ENCODE measurements at regions of chr1 and their contacts with region 1.

Region 1: GRCh38 chr1:211654838-211655787 is 20.3 kb downstream of the NEK2 start:
- DNase-seq: peak; percentile 67
- ATAC-seq: peak; percentile 93
- H3K4me3 ChIP-seq: no peak overlapping the region
- H3K27ac ChIP-seq: no peak overlapping the region
- H3K4me1 ChIP-seq: peaks cover 11 to 28% of the 10 kb centered on the region in 2 experiments; a peak in 3 of 4 replicates
- H3K27me3 ChIP-seq: no peaks in the 10 kb centered on the region
- CTCF ChIP-seq: peak; percentile 91 to 98 (median 92)
- POLR2A ChIP-seq: no peak
- RAD21 ChIP-seq: peak; percentile 99

Region 2: DNA sequence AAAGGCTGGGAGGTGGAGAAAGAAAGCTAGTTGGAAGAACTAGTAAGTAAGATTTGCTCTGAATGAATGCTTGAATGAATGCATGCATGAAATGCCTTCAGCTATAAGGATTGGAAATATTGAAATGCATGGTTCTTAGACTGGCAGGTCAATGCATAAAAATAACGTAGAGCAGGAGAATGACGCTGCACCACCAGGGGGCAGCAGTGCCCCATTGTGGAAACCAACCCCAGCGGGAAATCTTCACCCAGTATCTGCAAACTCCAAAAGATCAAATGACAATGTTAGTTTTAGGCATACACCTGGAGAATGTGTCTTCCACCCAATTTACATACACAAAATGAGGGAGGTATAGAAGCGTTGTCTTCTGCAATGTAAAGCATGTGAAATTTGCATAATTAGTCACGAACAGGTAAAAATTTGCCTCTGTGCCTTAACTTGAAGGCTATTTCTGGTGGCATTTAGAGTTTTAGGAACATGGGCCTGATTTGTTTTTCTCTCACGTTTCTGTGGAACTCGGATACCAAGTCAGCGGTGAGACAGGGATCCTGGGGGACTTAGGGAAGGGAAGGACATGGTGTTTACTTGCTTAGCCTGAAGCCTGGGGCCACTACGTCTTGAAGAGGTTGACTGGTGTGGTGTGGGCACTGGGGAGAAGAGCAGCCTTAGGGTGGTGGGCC is 1247.8 kb before region 1 on chr1:
- CTCF ChIA-PET with region 1: interaction called, 3 read pairs
- POLR2A ChIA-PET with region 1: no interaction called
- RAD21 ChIA-PET with region 1: no interaction called
- intact Hi-C with region 1: loop called (anchors 5 kb)
- DNase-seq: peak; percentile 27
- ATAC-seq: peak; percentile 92
- H3K4me3 ChIP-seq: no peak overlapping the region
- H3K27ac ChIP-seq: no peak overlapping the region
- H3K4me1 ChIP-seq: no peaks in the 10 kb centered on the region
- H3K27me3 ChIP-seq: no peaks in the 10 kb centered on the region
- CTCF ChIP-seq: peak; percentile 73 to 97 (median 88)
- POLR2A ChIP-seq: no peak
- RAD21 ChIP-seq: peak; percentile 91

Region 3: GRCh38 chr1:210584439-210585113 is 1070.5 kb before region 1 on chr1:
- CTCF ChIA-PET with region 1: no interaction called
- POLR2A ChIA-PET with region 1: no interaction called
- RAD21 ChIA-PET with region 1: no interaction called
- intact Hi-C with region 1: loop called (anchors 2 kb)
- DNase-seq: peak; percentile 54
- ATAC-seq: peak; percentile 99
- H3K4me3 ChIP-seq: no peak overlapping the region
- H3K27ac ChIP-seq: no peak overlapping the region
- H3K4me1 ChIP-seq: no peaks in the 10 kb centered on the region
- H3K27me3 ChIP-seq: peaks cover 17% of the 10 kb centered on the region; the same call in 1 of the 2 replicates
- CTCF ChIP-seq: peak; percentile 74 to 82 (median 76)
- POLR2A ChIP-seq: no peak
- RAD21 ChIP-seq: peak; percentile 92

Region 4: DNA sequence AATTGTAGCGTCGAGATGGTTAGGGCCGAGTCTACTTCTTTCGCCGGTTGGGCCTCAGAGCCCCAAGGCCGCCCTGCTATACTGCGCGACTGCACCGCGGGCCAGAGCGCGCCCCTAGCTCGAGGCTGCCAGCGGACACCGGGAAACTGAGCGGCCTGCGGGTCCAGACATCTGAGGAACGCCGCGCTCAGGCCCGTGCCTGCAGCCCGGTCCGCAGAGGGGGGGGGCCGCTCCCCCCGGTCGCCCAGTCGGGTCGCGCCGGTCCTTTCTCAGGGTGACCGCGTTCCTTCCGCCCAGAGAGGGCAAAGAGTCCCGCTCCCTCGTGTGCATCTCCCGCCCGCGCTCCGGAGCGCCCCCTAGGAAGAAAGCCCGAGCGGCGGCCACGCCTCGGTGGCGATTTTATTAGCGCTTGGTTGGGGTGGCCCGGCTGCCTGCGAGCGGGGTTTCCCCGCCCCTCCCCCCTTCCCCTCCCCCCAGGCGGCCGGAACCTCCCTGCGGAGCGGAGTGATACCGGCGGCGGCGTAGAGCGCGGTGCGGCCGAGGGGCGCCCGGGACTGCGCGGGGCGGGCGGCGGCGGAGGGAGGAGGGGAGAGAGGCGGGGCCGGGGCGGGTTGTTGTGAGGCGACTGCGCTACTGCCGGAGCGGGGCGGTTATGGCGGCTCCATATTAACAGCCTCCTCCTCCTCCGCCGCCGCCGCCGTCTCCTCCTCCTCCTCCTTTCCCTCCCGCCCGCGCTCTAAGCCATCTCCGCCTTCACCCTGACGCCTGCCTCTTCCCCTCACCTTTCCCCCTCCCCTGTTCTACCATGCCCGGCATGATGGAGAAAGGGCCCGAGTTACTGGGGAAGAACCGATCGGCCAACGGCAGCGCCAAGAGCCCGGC is 396.1 kb before region 1 on chr1 and contains the start of gene RCOR3:
- CTCF ChIA-PET with region 1: no interaction called
- POLR2A ChIA-PET with region 1: no interaction called
- RAD21 ChIA-PET with region 1: no interaction called
- intact Hi-C with region 1: loop called (anchors 1 kb)
- DNase-seq: peak; percentile 72
- ATAC-seq: peak; percentile 81
- H3K4me3 ChIP-seq: peak within 1 kb of the TSS; percentile 72 to 91
- H3K27ac ChIP-seq: peak within 1 kb of the TSS; percentile 96
- H3K4me1 ChIP-seq: peaks cover 14 to 21% of the 10 kb centered on the region in 2 experiments
- H3K27me3 ChIP-seq: no peaks in the 10 kb centered on the region
- CTCF ChIP-seq: peak; percentile 33 to 51 (median 49); a peak in 5 of 6 replicates
- POLR2A ChIP-seq: peak; percentile 12
- RAD21 ChIP-seq: 0 out of 2 replicates have a peak, but pooled peaks have one; percentile 10
- total RNA-seq, gene RCOR3: 25.7 TPM

Region 5: GRCh38 chr1:211281320-211282022 is 373.6 kb before region 1 on chr1:
- CTCF ChIA-PET with region 1: no interaction called
- POLR2A ChIA-PET with region 1: no interaction called
- RAD21 ChIA-PET with region 1: no interaction called
- intact Hi-C with region 1: no loop called
- DNase-seq: no peak
- ATAC-seq: no peak
- H3K4me3 ChIP-seq: no peak overlapping the region
- H3K27ac ChIP-seq: no peak overlapping the region
- H3K4me1 ChIP-seq: no peaks in the 10 kb centered on the region
- H3K27me3 ChIP-seq: no peaks in the 10 kb centered on the region
- CTCF ChIP-seq: no peak
- POLR2A ChIP-seq: no peak
- RAD21 ChIP-seq: no peak

Region 6: GRCh38 chr1:211469938-211470529 is 185.1 kb before region 1 on chr1:
- CTCF ChIA-PET with region 1: no interaction called
- POLR2A ChIA-PET with region 1: no interaction called
- RAD21 ChIA-PET with region 1: no interaction called
- intact Hi-C with region 1: loop called (anchors 2 kb)
- DNase-seq: peak; percentile 72
- ATAC-seq: peak; percentile 100
- H3K4me3 ChIP-seq: no peak overlapping the region
- H3K27ac ChIP-seq: no peak overlapping the region
- H3K4me1 ChIP-seq: peaks cover 3 to 11% of the 10 kb centered on the region in 2 experiments; a peak in 3 of 4 replicates
- H3K27me3 ChIP-seq: no peaks in the 10 kb centered on the region
- CTCF ChIP-seq: peak; percentile 83 to 90 (median 87)
- POLR2A ChIP-seq: no peak
- RAD21 ChIP-seq: peak; percentile 72

Region 7: DNA sequence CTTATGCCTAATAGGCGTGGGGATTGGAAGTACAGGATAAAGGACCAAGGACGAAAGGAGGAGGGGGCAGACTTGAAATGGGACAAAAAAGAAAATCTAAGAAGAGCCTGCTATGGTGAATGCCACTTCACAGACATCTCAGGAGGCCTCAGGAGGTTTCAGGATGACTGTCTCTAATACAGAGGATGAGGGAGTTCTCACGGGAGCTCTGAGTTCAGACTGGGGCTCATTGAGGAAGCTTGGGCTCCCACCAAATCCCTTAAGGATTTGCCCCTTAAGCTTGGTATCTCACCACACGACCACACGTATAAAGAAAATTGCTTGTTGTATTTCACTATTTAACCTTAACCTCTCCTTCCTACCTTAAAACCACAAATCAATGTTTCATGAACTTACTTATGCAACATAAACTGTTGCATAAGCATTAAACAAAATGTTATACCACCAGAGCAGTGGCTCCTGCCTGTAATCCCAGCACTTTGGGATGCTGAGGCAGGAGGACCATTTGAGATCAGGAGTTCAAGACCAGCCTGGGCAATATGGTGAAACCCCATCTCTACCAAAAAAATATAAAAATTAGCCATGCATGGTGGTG is 88.6 kb before region 1 on chr1:
- CTCF ChIA-PET with region 1: no interaction called
- POLR2A ChIA-PET with region 1: no interaction called
- RAD21 ChIA-PET with region 1: no interaction called
- intact Hi-C with region 1: no loop called
- DNase-seq: no peak
- ATAC-seq: no peak
- H3K4me3 ChIP-seq: no peak overlapping the region
- H3K27ac ChIP-seq: no peak overlapping the region
- H3K4me1 ChIP-seq: no peaks in the 10 kb centered on the region
- H3K27me3 ChIP-seq: no peaks in the 10 kb centered on the region
- CTCF ChIP-seq: no peak
- POLR2A ChIP-seq: no peak
- RAD21 ChIP-seq: no peak

Region 8: GRCh38 chr1:211578640-211579433 is 76.3 kb before region 1 on chr1 and contains the start of gene SLC30A1:
- CTCF ChIA-PET with region 1: interaction called, 5 read pairs
- POLR2A ChIA-PET with region 1: no interaction called
- RAD21 ChIA-PET with region 1: no interaction called
- intact Hi-C with region 1: loop called (anchors 1 kb)
- DNase-seq: peak; percentile 94
- ATAC-seq: peak; percentile 87
- H3K4me3 ChIP-seq: peak within 1 kb of the TSS; percentile 74 to 84
- H3K27ac ChIP-seq: peak within 1 kb of the TSS; percentile 84
- H3K4me1 ChIP-seq: peaks cover 10 to 40% of the 10 kb centered on the region in 2 experiments
- H3K27me3 ChIP-seq: no peaks in the 10 kb centered on the region
- CTCF ChIP-seq: no peak
- POLR2A ChIP-seq: peak; percentile 30
- RAD21 ChIP-seq: no peak
- total RNA-seq, gene SLC30A1: 9.7 TPM

Region 9: DNA sequence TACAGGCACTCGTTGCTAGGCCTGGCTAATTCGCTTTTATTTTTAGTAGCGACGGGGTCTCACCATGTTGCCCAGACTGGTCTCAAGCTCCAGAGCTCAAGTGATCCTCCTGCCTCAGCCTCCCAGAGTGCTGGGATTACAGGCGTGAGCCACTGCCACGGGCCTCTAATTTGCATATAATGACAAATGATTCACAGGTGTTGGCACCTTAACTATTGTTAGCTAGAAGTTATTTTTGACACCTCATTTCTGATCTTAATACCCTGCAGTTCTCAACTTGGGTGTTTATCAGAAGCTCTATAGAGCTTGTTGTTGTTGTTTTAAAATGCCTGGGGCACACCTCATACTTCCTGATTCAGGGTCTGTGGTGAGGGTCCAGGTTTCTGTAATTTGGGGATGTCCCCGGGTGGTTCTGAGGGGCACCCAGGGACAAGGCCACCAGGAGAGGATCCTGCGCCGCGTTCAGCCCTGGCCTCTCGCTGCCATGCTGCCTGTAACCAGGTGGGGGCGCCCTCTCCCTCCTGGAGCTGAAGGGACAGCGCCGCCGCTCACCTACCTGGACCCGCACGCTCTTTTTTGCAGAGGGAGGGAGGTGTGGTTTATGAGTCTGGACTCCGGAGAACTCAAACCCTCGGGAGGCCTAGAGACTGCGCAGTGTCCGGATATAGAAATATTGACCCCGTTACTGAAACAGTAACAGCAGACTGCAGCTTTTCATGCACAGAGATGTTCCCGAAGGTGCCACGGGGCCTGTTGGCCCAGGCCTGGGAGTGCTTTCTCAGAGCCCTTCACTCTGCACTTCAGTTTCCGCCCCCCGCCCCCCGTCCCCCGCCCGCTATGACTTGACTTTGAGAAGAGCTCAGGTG is 43.3 kb after region 1 on chr1:
- CTCF ChIA-PET with region 1: no interaction called
- POLR2A ChIA-PET with region 1: no interaction called
- RAD21 ChIA-PET with region 1: no interaction called
- intact Hi-C with region 1: no loop called
- DNase-seq: peak; percentile 69
- ATAC-seq: peak; percentile 98
- H3K4me3 ChIP-seq: 0 out of 4 replicates have a peak overlapping the region, but pooled peaks of 1 of the 2 experiments have one; percentile 11
- H3K27ac ChIP-seq: no peak overlapping the region
- H3K4me1 ChIP-seq: peaks cover 0 to 12% of the 10 kb centered on the region in 2 experiments; a peak in 2 of 4 replicates
- H3K27me3 ChIP-seq: no peaks in the 10 kb centered on the region
- CTCF ChIP-seq: peak; percentile 99
- POLR2A ChIP-seq: no peak
- RAD21 ChIP-seq: peak; percentile 99

Measured in HCT116 (cell line).